Activated T-helper 2 cell treated with anti-CD3 and anti-CD28 coated beads, Interferon-gamma antibody, Interleukin-2, Interleukin-4, amounts not matched to agents 10 μg/mL and 5 μg/mL and 100 μg/mL, durations not matched to agents 14 hours and 24 hours and 36 hours (primary cell): ENCODE measurements at regions of chr7 and their contacts with region 1.

Region 1: DNA sequence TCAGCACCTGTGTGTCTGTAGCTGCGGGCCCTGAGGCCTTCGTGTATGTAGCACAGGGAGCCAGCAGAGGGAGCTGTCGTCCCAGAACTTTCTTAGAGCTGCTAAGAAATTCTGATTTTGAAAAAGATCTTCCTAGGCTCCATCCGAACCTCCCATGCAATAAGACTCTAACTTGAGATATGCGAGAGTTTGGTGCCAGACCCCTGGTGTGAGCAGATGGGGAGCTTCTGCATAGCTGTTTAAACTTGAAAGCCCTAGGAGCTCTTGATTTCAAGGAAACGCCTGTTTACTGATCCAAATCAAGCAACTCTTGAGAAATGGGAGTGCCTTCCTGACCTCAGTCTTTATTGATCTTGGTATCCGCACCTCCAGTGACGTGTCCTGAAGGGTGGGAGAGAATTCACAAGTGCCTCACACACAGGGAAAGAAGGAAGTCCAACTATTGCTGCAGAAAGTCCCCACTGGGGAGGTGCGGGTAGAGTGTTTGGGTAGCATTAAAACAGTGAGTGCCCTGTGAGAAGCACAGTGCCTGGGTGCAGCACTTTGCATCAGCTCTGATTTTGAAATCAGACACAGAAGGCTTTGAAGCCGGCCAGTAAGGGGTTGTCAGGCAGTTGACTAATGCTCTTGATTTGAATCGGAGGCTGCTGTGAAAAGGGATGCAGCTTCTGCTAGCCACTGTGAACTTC is 66.4 kb upstream of the STRIP2 start:
- DNase-seq: peak; percentile 63
- H3K4me3 Mint-ChIP-seq: peak overlapping the region; percentile 68
- H3K27ac Mint-ChIP-seq: peak overlapping the region; percentile 86
- H3K4me1 Mint-ChIP-seq: peaks cover 31% of the 10 kb centered on the region
- H3K27me3 Mint-ChIP-seq: no peaks in the 10 kb centered on the region

Region 2: GRCh38 chr7:129343099-129343700 is 24.6 kb before region 1 on chr7:
- intact Hi-C with region 1: loop called (anchors 2 kb)
- DNase-seq: no peak
- H3K4me3 Mint-ChIP-seq: no peak overlapping the region
- H3K27ac Mint-ChIP-seq: peak overlapping the region; percentile 59
- H3K4me1 Mint-ChIP-seq: peaks cover 38% of the 10 kb centered on the region
- H3K27me3 Mint-ChIP-seq: peaks cover 2% of the 10 kb centered on the region

Region 3: DNA sequence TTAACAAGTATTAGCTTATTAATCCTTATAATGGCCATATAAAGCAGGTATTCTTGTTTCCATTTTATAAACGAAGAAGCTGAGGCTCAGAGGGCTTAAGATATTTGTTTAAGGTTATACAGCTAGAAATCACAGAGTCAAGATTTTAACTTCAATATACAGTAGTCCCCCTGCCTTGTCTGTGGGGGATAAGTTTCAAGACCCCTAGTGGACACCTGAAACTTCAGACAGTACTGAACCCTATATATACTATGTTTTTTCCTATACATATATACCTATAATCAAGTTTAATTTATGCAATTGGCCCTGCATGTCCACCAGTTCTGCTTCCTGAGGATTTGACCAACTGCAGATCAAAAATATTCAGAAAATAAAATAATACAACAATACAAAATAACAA is 22.0 kb after region 1 on chr7:
- intact Hi-C with region 1: no loop called
- DNase-seq: no peak
- H3K4me3 Mint-ChIP-seq: no peak overlapping the region
- H3K27ac Mint-ChIP-seq: no peak overlapping the region
- H3K4me1 Mint-ChIP-seq: peaks cover 7% of the 10 kb centered on the region
- H3K27me3 Mint-ChIP-seq: no peaks in the 10 kb centered on the region

Region 4: DNA sequence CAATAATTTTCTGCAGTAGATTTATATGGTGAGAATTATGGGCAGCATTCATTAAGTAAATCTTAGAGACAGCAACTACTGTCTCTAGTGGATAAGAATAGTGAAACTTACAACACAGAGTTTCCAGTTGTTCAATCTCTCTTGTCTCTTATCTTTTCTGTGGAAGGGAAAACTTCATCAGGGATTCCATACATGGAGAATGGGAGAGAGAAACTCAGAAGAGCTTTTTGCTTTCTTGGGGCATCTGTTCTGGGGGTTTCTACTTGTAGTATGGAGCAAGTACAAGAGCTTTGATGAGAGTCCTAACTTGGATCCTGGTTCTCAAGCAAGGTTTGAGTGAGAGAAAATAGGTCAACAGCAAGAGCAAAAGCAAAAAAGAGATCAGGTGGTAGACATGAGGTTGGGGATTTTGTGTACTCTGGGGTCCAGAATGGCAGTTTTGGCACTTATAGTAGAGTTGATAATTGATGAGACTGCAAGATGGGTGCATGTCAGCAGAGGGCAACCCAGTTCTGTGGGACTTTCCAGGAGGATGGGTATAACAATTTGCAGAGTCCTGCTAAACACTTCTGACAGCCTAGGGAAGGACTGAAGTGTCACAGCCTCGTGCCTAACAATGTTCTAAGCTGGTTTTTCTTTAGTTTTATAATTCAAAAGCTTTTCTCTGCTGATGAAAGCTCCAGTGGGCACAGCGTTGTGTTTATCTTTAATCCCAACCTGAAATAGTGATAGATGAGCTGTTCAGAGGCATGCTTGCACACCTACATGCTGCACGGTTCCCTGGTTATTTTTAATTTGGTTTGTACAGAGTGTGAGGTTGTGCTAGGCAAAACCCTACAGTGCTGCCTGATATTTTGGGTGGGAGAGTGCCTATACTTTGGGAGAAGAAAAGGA is 34.4 kb after region 1 on chr7:
- intact Hi-C with region 1: loop called (anchors 2 kb)
- DNase-seq: no peak
- H3K4me3 Mint-ChIP-seq: no peak overlapping the region
- H3K27ac Mint-ChIP-seq: peak overlapping the region; percentile 13
- H3K4me1 Mint-ChIP-seq: peaks cover 26% of the 10 kb centered on the region
- H3K27me3 Mint-ChIP-seq: no peaks in the 10 kb centered on the region

Region 5: GRCh38 chr7:129412501-129412900 is 44.7 kb after region 1 on chr7:
- intact Hi-C with region 1: no loop called
- DNase-seq: no peak
- H3K4me3 Mint-ChIP-seq: no peak overlapping the region
- H3K27ac Mint-ChIP-seq: no peak overlapping the region
- H3K4me1 Mint-ChIP-seq: no peaks in the 10 kb centered on the region
- H3K27me3 Mint-ChIP-seq: no peaks in the 10 kb centered on the region

Region 6: GRCh38 chr7:129454249-129454551 is 86.4 kb after region 1 on chr7:
- intact Hi-C with region 1: no loop called
- DNase-seq: no peak
- H3K4me3 Mint-ChIP-seq: no peak overlapping the region
- H3K27ac Mint-ChIP-seq: no peak overlapping the region
- H3K4me1 Mint-ChIP-seq: peaks cover 8% of the 10 kb centered on the region
- H3K27me3 Mint-ChIP-seq: no peaks in the 10 kb centered on the region

Region 7: DNA sequence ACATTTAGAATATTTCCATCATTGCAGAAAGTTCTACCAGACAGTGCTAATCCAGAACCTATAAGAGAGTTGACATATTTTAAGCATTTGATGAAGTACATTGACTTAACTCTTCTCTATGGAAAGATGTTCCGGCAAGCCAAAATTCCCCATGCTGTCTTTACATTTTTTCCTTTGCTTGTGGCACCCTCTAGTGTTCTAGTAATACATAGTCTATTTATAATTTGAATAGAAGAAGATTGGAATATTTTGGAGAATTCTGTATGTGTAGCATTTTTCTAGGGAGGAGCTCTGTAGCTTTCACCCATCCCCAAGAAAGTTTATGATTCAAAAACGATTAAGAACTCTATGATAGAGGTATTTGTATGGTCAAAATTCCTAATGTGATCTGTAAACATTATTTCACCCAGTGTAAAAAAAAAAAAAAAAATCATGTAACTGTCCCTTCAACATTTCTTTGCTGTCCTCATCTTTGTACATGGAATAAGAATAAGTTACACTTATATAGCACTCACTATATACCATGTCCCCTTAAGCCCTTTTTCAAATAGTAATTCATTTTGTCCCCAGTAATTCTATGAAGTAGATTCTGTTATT is 276.9 kb after region 1 on chr7:
- intact Hi-C with region 1: no loop called
- DNase-seq: no peak
- H3K4me3 Mint-ChIP-seq: no peak overlapping the region
- H3K27ac Mint-ChIP-seq: no peak overlapping the region
- H3K4me1 Mint-ChIP-seq: peaks cover 10% of the 10 kb centered on the region
- H3K27me3 Mint-ChIP-seq: no peaks in the 10 kb centered on the region